AG04450 (cell line): ENCODE measurements at regions of chr9 and their contacts with region 1.

Region 1: GRCh38 chr9:121322037-121322775 is 47.8 kb downstream of the STOM start:
- DNase-seq: peak; percentile 91
- H3K4me3 ChIP-seq: no peak overlapping the region
- H3K27ac ChIP-seq: peak overlapping the region; percentile 96
- H3K27me3 ChIP-seq: no peaks in the 10 kb centered on the region
- CTCF ChIP-seq: no peak

Region 2: DNA sequence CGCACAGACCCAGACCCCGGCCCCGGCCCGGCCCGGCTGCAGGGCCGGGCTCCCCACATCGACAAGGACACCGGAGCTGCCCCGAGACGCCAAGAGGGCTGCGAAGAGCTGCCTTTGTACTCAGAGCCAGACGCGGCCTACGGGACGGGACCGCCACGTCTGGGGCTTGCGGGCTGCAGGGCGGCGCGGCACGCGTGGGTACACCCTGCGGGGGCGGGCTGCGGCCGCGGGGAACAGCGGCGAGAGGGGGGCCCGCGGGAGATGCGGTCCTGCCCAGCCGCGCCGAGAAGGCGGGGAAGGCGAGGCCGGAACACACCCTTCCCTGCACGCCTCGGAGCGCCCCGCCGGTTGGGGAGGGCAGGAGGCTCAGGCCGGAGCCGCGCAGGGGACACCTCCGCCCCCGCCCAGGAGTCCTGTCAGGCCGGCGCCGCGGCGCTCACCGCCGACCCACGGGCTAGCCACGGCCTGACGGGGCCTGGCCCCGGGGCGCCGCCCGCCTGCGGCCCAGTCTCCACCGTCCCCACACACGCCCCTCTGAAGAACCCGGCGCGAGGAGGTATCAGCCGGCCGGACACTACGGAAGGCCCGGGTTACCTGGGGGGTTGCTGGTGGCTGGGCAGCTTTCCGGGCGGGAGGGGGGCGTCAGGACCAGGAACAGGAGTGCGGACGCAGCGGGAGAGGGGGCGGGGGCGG is 121.0 kb before region 1 on chr9:
- CTCF ChIA-PET with region 1: interaction called, 11 read pairs
- POLR2A ChIA-PET with region 1: no interaction called
- DNase-seq: no peak
- H3K4me3 ChIP-seq: peak overlapping the region; percentile 81
- H3K27ac ChIP-seq: no peak overlapping the region
- H3K27me3 ChIP-seq: no peaks in the 10 kb centered on the region
- CTCF ChIP-seq: no peak

Region 3: DNA sequence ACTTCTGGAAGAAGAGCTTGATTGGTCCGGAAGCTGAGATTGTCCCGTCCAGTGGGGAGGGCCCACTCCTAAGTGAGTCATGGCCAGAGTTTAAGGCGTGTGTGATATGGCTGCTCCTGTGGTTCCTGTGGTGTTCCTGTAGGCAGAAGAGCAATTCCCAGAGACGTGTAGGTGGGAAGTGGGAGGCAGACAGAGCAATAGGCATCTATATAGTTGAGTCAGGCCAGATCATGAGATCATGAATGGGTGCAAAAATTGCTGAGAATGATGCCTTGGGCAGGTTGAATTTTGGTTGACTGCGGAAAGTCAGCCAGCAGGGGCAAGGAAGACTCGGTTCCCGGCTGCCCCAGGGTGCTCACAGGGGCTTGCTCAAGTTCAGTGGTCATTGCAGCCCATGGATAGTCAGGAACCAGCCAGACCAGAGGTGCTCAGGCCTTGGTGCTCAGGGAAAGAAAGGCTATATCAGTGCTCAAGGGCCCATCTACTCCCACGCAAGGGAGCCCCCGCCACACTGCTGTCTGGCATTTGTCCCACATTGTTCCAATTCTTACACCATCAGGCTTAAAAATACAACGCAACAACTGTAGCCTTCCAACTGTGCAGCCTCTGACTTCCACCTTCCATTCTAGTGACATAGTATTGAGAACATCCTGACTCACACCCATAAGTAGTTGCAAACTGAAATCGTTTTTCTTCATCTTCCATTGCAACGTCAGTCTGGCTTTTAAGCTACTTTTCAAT is 75.2 kb before region 1 on chr9:
- CTCF ChIA-PET with region 1: interaction called, 16 read pairs
- POLR2A ChIA-PET with region 1: interaction called, 3 read pairs
- DNase-seq: peak; percentile 68
- H3K4me3 ChIP-seq: no peak overlapping the region
- H3K27ac ChIP-seq: peak overlapping the region; percentile 82
- H3K27me3 ChIP-seq: no peaks in the 10 kb centered on the region
- CTCF ChIP-seq: no peak

Region 4: GRCh38 chr9:121305269-121305994 is 16.8 kb before region 1 on chr9:
- CTCF ChIA-PET with region 1: interaction called, 16 read pairs
- POLR2A ChIA-PET with region 1: no interaction called
- DNase-seq: no peak
- H3K4me3 ChIP-seq: no peak overlapping the region
- H3K27ac ChIP-seq: no peak overlapping the region
- H3K27me3 ChIP-seq: no peaks in the 10 kb centered on the region
- CTCF ChIP-seq: no peak

Region 5: GRCh38 chr9:121359351-121360294 is 37.4 kb after region 1 on chr9:
- CTCF ChIA-PET with region 1: interaction called, 15 read pairs
- POLR2A ChIA-PET with region 1: no interaction called
- DNase-seq: no peak
- H3K4me3 ChIP-seq: no peak overlapping the region
- H3K27ac ChIP-seq: no peak overlapping the region
- H3K27me3 ChIP-seq: no peaks in the 10 kb centered on the region
- CTCF ChIP-seq: no peak

Region 6: GRCh38 chr9:121386442-121387185 is 64.4 kb after region 1 on chr9:
- CTCF ChIA-PET with region 1: interaction called, 169 read pairs
- POLR2A ChIA-PET with region 1: no interaction called
- DNase-seq: no peak
- H3K4me3 ChIP-seq: no peak overlapping the region
- H3K27ac ChIP-seq: no peak overlapping the region
- H3K27me3 ChIP-seq: no peaks in the 10 kb centered on the region
- CTCF ChIP-seq: no peak

Region 7: DNA sequence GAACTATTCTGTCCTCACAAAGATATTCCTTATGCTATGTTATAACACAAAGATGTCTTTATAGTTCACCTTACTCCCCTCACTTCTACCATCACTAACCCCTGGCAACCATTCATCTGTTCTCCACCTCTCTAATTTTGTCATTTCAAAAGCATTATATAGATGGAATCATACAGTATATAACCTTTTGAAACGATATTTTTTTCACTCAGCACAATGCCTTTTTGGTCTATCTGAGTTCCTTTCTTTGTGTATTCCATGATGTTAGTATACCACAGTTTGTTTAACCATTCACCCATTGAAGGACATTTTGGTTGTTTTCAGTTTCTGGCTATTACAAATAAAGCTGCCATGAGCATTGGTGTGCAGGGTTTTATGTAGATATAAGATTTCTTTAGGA is 83.7 kb after region 1 on chr9:
- CTCF ChIA-PET with region 1: interaction called, 202 read pairs
- POLR2A ChIA-PET with region 1: no interaction called
- DNase-seq: no peak
- H3K4me3 ChIP-seq: no peak overlapping the region
- H3K27ac ChIP-seq: no peak overlapping the region
- H3K27me3 ChIP-seq: peaks cover 9% of the 10 kb centered on the region
- CTCF ChIP-seq: no peak